H1 (cell line): ENCODE measurements at regions of chr4 and their contacts with region 1.

Region 1: GRCh38 chr4:4677556-4678522 is 136.0 kb upstream of the STX18 start:
- DNase-seq: peak in 1 of 2 experiments; percentile 70
- H3K4me3 ChIP-seq: peak overlapping the region in 1 of 4 experiments; percentile 11; a peak in 4 of 8 replicates
- H3K27ac ChIP-seq: no peak overlapping the region
- H3K4me1 ChIP-seq: peaks cover 0 to 11% (median 6%) of the 10 kb centered on the region in 4 experiments; a peak in 5 of 7 replicates
- H3K27me3 ChIP-seq: peaks cover 0 to 9% (median 2%) of the 10 kb centered on the region in 4 experiments; a peak in 4 of 7 replicates
- CTCF ChIP-seq: peak; percentile 75 to 93 (median 80)
- EP300 ChIP-seq: no peak
- POLR2A ChIP-seq: no peak
- RAD21 ChIP-seq: peak; percentile 88 to 91

Region 2: GRCh38 chr4:4633431-4633830 is 44.4 kb before region 1 on chr4:
- CTCF ChIA-PET with region 1: no interaction called
- POLR2A ChIA-PET with region 1: no interaction called
- DNase-seq: no peak
- H3K4me3 ChIP-seq: no peak overlapping the region
- H3K27ac ChIP-seq: no peak overlapping the region
- H3K4me1 ChIP-seq: no peaks in the 10 kb centered on the region
- H3K27me3 ChIP-seq: no peaks in the 10 kb centered on the region
- CTCF ChIP-seq: no peak
- EP300 ChIP-seq: no peak
- POLR2A ChIP-seq: no peak
- RAD21 ChIP-seq: no peak

Region 3: GRCh38 chr4:4666693-4667621 is 10.9 kb before region 1 on chr4:
- CTCF ChIA-PET with region 1: interaction called, 61 read pairs
- POLR2A ChIA-PET with region 1: interaction called, 3 read pairs
- DNase-seq: no peak
- H3K4me3 ChIP-seq: peak overlapping the region; percentile 12 to 52 (median 22); a peak in 7 of 8 replicates
- H3K27ac ChIP-seq: peak overlapping the region; percentile 73; the same call in 1 of the 2 replicates
- H3K4me1 ChIP-seq: peaks cover 14 to 25% (median 19%) of the 10 kb centered on the region in 4 experiments
- H3K27me3 ChIP-seq: no peaks in the 10 kb centered on the region; a peak in 2 of 7 replicates
- CTCF ChIP-seq: no peak
- EP300 ChIP-seq: no peak
- POLR2A ChIP-seq: no peak
- RAD21 ChIP-seq: no peak; a peak in 1 of 4 replicates

Region 4: GRCh38 chr4:4743124-4743523 is 65.3 kb after region 1 on chr4:
- CTCF ChIA-PET with region 1: interaction called, 10 read pairs
- POLR2A ChIA-PET with region 1: no interaction called
- DNase-seq: no peak
- H3K4me3 ChIP-seq: no peak overlapping the region
- H3K27ac ChIP-seq: no peak overlapping the region
- H3K4me1 ChIP-seq: no peaks in the 10 kb centered on the region
- H3K27me3 ChIP-seq: no peaks in the 10 kb centered on the region; a peak in 1 of 7 replicates
- CTCF ChIP-seq: no peak
- EP300 ChIP-seq: no peak
- POLR2A ChIP-seq: no peak
- RAD21 ChIP-seq: no peak

Region 5: DNA sequence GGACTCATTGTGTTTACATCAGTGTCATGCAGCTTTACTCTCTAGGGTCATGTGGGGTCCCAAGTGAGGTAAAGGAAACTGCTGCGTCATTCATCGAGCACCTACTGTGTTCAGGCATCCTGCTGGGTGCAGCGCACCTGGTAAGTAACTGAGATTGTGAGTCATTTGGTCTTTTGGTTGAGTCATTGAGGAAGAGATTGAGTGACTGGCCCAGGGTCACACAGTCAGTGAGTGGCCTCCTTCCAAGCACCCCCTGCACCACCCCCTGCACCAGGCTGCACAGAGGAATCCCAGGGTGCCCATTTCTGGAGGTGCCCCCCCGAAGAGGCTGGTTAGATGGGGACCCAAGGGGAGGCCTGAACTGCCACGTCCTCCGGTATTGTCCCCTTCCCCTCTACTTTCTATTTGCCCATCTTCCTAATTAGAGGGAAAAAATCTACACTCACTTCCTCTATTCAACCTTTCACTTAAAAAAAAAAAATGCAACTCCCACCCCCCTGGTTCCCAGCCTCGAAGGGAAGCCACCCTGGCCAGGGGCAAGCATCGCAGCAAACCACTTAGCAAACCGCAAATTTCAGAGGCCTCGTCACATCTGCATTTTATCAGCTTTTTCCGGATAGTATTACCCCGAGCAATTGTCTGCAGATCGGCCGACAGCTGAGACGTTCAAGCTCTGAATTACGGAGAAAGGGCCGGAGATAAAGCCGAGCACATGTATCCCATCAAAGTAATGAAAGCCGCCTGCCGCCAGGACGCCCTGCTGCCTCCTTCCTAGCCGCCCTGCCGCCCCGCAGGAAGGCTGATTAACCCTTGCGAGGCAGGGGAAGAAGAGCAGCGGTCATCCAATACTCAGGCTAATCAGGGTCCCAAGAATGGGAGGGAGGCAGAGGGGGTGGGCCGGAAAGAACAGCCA is 85.3 kb after region 1 on chr4:
- CTCF ChIA-PET with region 1: interaction called, 14 read pairs
- POLR2A ChIA-PET with region 1: no interaction called
- DNase-seq: peak in 1 of 2 experiments; percentile 63
- H3K4me3 ChIP-seq: peak overlapping the region in 1 of 4 experiments; percentile 17; a peak in 3 of 8 replicates
- H3K27ac ChIP-seq: no peak overlapping the region
- H3K4me1 ChIP-seq: peaks cover 3 to 27% (median 20%) of the 10 kb centered on the region in 4 experiments
- H3K27me3 ChIP-seq: peaks cover 0 to 26% (median 12%) of the 10 kb centered on the region in 4 experiments; a peak in 5 of 7 replicates
- CTCF ChIP-seq: 0 out of 4 replicates have a peak, but pooled peaks of 1 of the 3 experiments have one; percentile 4
- EP300 ChIP-seq: no peak
- POLR2A ChIP-seq: no peak
- RAD21 ChIP-seq: no peak

Region 6: DNA sequence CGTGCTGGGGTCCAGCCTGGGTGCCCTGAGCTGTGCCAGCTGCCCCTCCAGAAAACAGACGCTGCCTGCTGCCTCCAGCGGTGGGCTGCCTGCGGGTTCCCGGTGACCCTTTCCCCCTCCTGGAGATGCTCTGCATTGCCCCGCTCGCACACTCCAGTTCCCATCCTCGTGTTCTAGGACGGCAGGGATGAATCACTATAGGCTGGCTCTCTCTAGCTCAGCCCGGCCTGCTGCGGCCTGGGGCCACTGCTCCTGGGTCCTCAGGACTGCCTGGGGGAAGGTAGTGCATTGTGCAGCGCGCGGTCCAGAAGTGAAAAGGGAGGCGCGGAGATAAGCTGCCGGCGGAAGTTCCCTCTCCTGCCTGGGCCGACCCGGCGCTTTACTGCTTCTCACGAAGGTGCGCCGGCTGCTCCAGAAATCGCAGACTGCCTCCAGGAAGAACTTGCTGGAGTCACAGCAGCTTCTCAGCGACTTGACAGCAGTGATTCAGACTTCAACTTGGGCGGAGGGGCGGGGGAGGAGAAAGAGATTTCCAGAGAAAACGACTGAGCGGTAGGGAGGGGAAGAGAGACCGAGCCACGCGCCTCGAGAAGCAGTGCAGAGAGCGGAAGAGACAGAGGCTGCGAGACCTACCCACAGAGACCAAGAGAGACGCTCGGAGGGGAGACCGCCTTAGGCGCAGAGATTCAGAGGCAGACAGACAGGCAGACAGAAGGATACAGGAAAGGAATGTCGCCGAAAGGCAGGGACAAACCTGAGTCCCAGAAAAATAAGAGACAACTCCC is 174.9 kb after region 1 on chr4:
- CTCF ChIA-PET with region 1: interaction called, 11 read pairs
- POLR2A ChIA-PET with region 1: no interaction called
- DNase-seq: peak in 1 of 2 experiments; percentile 78
- H3K4me3 ChIP-seq: peak overlapping the region in 2 of 4 experiments; percentile 8 to 47; a peak in 5 of 8 replicates
- H3K27ac ChIP-seq: no peak overlapping the region
- H3K4me1 ChIP-seq: peaks cover 0 to 16% (median 8%) of the 10 kb centered on the region in 4 experiments; a peak in 6 of 7 replicates
- H3K27me3 ChIP-seq: peaks cover 78 to 93% (median 87%) of the 10 kb centered on the region in 4 experiments
- CTCF ChIP-seq: peak in 2 of 3 experiments; percentile 60 to 86; a peak in 3 of 4 replicates
- EP300 ChIP-seq: no peak
- POLR2A ChIP-seq: no peak
- RAD21 ChIP-seq: peak; percentile 55 to 66